Lower lobe of right lung (tissue), 2 donors: ENCODE measurements at regions of chr12 and their contacts with region 1.

Region 1: GRCh38 chr12:94133964-94134795 is 14.2 kb upstream of the PLXNC1 start:
- DNase-seq: no peak
- ATAC-seq: peak; percentile 81
- H3K4me3 ChIP-seq: no peak overlapping the region
- H3K27ac ChIP-seq: no peak overlapping the region
- H3K4me1 ChIP-seq: peaks cover 6% of the 10 kb centered on the region
- H3K27me3 ChIP-seq: no peaks in the 10 kb centered on the region
- CTCF ChIP-seq: peak; percentile 79

Region 2: GRCh38 chr12:94172973-94173372 is 38.8 kb after region 1 on chr12:
- intact Hi-C with region 1: no loop called
- DNase-seq: no peak
- ATAC-seq: peak; percentile 44 to 67
- H3K4me3 ChIP-seq: no peak overlapping the region
- H3K27ac ChIP-seq: peak overlapping the region; percentile 57
- H3K4me1 ChIP-seq: peaks cover 23% of the 10 kb centered on the region
- H3K27me3 ChIP-seq: no peaks in the 10 kb centered on the region
- CTCF ChIP-seq: no peak

Region 3: DNA sequence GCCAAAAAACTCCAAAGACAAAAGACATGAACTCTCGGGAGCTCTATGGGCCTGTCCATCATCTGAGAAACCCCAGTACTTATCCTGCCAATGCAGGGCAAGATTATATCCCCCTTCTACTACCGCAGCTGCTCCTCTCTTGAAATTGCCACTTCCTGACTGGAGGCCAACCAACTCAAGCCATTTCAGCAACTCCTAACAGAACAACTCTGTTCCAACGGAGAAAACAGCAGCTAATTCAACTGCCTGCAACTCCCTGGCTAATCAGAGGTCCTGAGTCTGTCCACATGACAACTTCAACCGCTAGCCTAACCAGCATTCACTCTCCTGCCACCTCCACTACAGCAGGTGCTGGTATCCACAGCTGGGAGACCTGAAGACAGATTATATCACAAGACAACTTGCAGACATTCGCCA is 301.3 kb after region 1 on chr12:
- intact Hi-C with region 1: loop called (anchors 10 kb)
- DNase-seq: no peak
- ATAC-seq: peak in 1 of 2 donors; percentile 31
- H3K4me3 ChIP-seq: no peak overlapping the region
- H3K27ac ChIP-seq: no peak overlapping the region
- H3K4me1 ChIP-seq: peaks cover 10% of the 10 kb centered on the region
- H3K27me3 ChIP-seq: no peaks in the 10 kb centered on the region
- CTCF ChIP-seq: no peak

Region 4: GRCh38 chr12:94532490-94533422 is 398.6 kb after region 1 on chr12:
- intact Hi-C with region 1: loop called (anchors 10 kb)
- DNase-seq: peak; percentile 67
- ATAC-seq: peak; percentile 79 to 88
- H3K4me3 ChIP-seq: no peak overlapping the region
- H3K27ac ChIP-seq: no peak overlapping the region
- H3K4me1 ChIP-seq: peaks cover 6% of the 10 kb centered on the region
- H3K27me3 ChIP-seq: no peaks in the 10 kb centered on the region
- CTCF ChIP-seq: peak; percentile 77